Mammary epithelial cell (primary cell): ENCODE measurements at regions of chr5 and their contacts with region 1.

Region 1: DNA sequence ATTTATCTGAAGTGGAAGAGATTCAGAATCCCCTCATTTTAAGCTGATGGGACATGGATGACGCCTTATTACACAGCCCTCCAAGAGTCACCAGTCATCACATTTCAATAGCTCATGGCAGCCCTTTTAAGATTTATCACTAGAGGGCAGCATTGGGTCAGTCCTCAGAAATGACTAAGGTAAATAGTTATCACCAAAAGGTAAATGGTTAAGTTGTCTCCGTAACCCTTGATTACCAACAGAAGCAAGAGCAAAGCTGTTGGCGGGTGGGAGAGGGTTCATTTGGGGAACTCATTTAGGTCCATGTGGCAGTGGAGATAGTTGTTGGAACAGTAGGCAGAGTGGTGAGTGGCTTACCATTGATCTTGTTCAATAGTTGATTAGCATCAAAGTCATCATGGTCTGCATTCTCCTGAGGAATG is 12.0 kb upstream of the C9 start:
- DNase-seq: peak; percentile 52
- H3K4me3 ChIP-seq: no peak overlapping the region
- H3K27ac ChIP-seq: no peak overlapping the region
- H3K4me1 ChIP-seq: no peaks in the 10 kb centered on the region
- H3K27me3 ChIP-seq: no peaks in the 10 kb centered on the region
- CTCF ChIP-seq: peak; percentile 83 to 84

Region 2: GRCh38 chr5:39314591-39314990 is 61.7 kb before region 1 on chr5:
- CTCF ChIA-PET with region 1: no interaction called
- dilution Hi-C with region 1: no loop called
- in situ Hi-C with region 1: no loop called
- intact Hi-C with region 1: no loop called
- DNase-seq: no peak
- H3K4me3 ChIP-seq: no peak overlapping the region
- H3K27ac ChIP-seq: no peak overlapping the region
- H3K4me1 ChIP-seq: no peaks in the 10 kb centered on the region
- H3K27me3 ChIP-seq: no peaks in the 10 kb centered on the region
- CTCF ChIP-seq: peak in 1 of 2 donors; percentile 14

Region 3: DNA sequence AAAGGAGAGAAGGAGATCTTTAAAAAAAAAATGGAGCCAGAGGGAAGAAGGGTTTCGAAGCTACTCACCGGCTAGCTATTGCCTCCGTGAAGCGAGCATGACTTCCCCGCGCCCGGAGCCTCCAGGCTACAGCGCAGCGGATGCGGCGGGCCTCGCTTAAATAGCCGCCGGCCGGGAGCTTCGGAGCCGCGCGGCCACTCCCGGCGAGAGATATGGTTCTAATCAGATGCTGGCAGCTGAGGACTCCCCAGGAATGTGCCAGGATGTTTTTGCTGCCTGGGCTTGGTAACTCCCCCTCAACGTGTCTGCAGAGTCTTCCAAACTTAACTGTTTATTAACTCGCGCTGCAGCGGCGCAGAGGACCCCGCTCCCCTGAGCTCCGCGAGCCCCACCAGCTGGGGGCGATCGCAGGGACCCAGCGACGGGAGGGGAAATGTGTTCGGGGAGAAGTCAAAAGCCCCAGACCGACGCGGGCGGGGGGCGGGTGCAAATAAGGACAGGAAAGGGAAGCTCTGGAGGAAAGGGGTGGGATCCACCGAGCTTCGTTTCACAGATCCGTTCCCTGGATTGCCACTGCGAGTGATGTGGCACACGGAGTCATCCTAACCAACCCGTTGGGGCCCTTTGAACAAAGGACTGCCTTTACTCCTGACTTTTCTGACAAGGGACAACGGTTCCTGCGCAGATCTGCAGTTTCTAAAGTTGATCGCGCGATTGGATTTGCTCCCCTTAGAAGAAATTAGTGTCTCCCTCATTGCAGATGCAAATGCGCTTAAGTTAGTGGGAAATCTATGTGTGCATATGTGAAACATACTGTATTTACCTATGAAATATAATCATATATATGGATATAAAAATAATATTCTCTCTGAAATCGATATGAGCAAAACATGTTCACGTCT is 48.7 kb after region 1 on chr5 and contains the start of gene DAB2:
- CTCF ChIA-PET with region 1: interaction called, 7 read pairs
- dilution Hi-C with region 1: no loop called
- in situ Hi-C with region 1: no loop called
- intact Hi-C with region 1: loop called (anchors 1 kb)
- DNase-seq: peak; percentile 86
- H3K4me3 ChIP-seq: peak within 1 kb of the TSS; percentile 62 to 72 (median 66)
- H3K27ac ChIP-seq: peak within 1 kb of the TSS; percentile 79
- H3K4me1 ChIP-seq: peaks cover 41% of the 10 kb centered on the region
- H3K27me3 ChIP-seq: no peaks in the 10 kb centered on the region
- CTCF ChIP-seq: peak; percentile 11 to 49
- total RNA-seq, gene DAB2: 33.8 to 67.7 TPM

Region 4: DNA sequence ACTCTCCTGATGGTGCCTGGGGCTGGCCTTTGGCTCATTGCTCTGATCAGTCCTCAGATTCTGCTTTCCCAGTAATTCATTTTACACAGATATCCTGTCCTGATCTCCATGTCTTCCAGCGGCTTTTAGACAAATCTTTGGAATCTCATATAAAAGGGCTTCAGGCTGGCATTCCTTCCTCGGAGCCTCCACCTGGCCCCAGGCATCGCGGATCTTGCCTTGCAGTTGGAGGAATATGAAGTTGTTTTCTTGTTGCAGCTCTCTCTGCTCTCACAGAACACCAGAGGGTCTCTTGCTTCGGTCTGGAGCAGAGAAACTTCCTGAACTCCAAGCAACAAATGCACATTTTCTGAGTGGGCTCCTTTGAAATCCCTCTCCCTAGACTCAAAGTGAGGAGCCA is 177.9 kb after region 1 on chr5:
- CTCF ChIA-PET with region 1: no interaction called
- dilution Hi-C with region 1: no loop called
- in situ Hi-C with region 1: loop called (anchors 5 kb)
- intact Hi-C with region 1: no loop called
- DNase-seq: no peak
- H3K4me3 ChIP-seq: no peak overlapping the region
- H3K27ac ChIP-seq: no peak overlapping the region
- H3K4me1 ChIP-seq: no peaks in the 10 kb centered on the region
- H3K27me3 ChIP-seq: no peaks in the 10 kb centered on the region
- CTCF ChIP-seq: no peak